A673 (cell line): ENCODE measurements at regions of chr10 and their contacts with region 1.

Region 1: DNA sequence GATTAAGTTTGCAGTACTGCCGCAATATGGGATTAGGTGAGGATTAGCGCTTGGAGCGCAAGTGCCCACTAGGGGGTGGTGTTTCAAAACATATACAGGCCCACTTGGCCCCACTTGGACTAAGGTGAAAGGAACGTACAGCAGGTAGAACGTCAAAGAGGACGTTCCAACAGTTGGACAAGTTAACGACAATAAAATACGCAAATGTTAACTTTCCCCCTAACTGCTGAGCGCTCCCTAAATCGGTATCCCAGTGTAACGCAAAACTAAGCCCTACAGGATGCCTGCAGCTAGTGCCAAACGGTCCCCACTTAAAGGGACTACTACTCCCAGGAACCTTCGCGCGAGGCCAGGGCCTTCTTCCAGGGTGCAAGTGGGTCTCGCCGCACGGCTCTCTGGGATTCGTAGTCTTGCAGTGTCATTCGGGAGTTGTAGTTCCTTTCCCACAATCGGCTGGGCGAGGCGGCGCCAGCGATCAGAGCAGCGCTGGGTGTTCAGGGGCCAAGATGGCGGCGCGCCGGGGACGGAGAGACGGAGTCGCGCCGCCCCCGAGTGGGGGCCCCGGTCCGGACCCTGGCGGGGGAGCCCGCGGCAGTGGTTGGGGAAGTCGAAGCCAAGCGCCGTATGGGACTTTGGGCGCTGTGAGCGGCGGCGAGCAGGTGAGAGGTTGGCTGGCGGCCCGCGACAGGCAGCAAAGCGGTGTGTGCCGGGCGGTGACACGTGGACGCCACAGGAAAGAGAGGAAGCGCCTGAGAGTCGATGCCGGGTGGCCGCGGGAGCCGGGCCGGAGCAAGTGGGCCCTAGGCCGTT is at the start of gene PPRC1:
- DNase-seq: peak; percentile 100
- H3K4me3 ChIP-seq: peak within 1 kb of the TSS; percentile 95
- H3K27ac ChIP-seq: peak within 1 kb of the TSS; percentile 97
- H3K4me1 ChIP-seq: peaks cover 22% of the 10 kb centered on the region
- H3K27me3 ChIP-seq: no peaks in the 10 kb centered on the region
- CTCF ChIP-seq: peak; percentile 96
- total RNA-seq, gene PPRC1: 93.8 and 103 TPM in 2 replicates

Region 2: GRCh38 chr10:101995451-101996063 is 137.2 kb before region 1 on chr10:
- CTCF ChIA-PET with region 1: no interaction called
- POLR2A ChIA-PET with region 1: no interaction called
- intact Hi-C with region 1: no loop called
- DNase-seq: no peak
- H3K4me3 ChIP-seq: no peak overlapping the region
- H3K27ac ChIP-seq: no peak overlapping the region
- H3K4me1 ChIP-seq: peaks cover 5% of the 10 kb centered on the region
- H3K27me3 ChIP-seq: no peaks in the 10 kb centered on the region
- CTCF ChIP-seq: no peak

Region 3: GRCh38 chr10:102114861-102115618 is 17.7 kb before region 1 on chr10:
- CTCF ChIA-PET with region 1: interaction called, 11 read pairs
- POLR2A ChIA-PET with region 1: interaction called, 6 read pairs
- intact Hi-C with region 1: no loop called
- DNase-seq: peak; percentile 97
- H3K4me3 ChIP-seq: peak overlapping the region; percentile 96
- H3K27ac ChIP-seq: peak overlapping the region; percentile 81
- H3K4me1 ChIP-seq: peaks cover 58% of the 10 kb centered on the region
- H3K27me3 ChIP-seq: no peaks in the 10 kb centered on the region
- CTCF ChIP-seq: no peak

Region 4: GRCh38 chr10:102120991-102121753 is 11.6 kb before region 1 on chr10:
- CTCF ChIA-PET with region 1: interaction called, 11 read pairs
- POLR2A ChIA-PET with region 1: interaction called, 3 read pairs
- intact Hi-C with region 1: loop called (anchors 1 kb)
- DNase-seq: peak; percentile 87
- H3K4me3 ChIP-seq: peak overlapping the region; percentile 76
- H3K27ac ChIP-seq: peak overlapping the region; percentile 81
- H3K4me1 ChIP-seq: peaks cover 49% of the 10 kb centered on the region
- H3K27me3 ChIP-seq: no peaks in the 10 kb centered on the region
- CTCF ChIP-seq: no peak

Region 5: GRCh38 chr10:102151774-102152544 is 19.2 kb after region 1 on chr10 and contains the start of gene NOLC1:
- CTCF ChIA-PET with region 1: no interaction called
- POLR2A ChIA-PET with region 1: interaction called, 3 read pairs
- intact Hi-C with region 1: loop called (anchors 2 kb)
- DNase-seq: peak; percentile 99
- H3K4me3 ChIP-seq: peak within 1 kb of the TSS; percentile 73
- H3K27ac ChIP-seq: peak within 1 kb of the TSS; percentile 93
- H3K4me1 ChIP-seq: peaks cover 7% of the 10 kb centered on the region
- H3K27me3 ChIP-seq: no peaks in the 10 kb centered on the region
- CTCF ChIP-seq: no peak
- total RNA-seq, gene NOLC1: 194 and 225 TPM in 2 replicates

Region 6: GRCh38 chr10:102322914-102323313 is 190.1 kb after region 1 on chr10:
- CTCF ChIA-PET with region 1: no interaction called
- POLR2A ChIA-PET with region 1: no interaction called
- intact Hi-C with region 1: no loop called
- DNase-seq: no peak
- H3K4me3 ChIP-seq: no peak overlapping the region
- H3K27ac ChIP-seq: no peak overlapping the region
- H3K4me1 ChIP-seq: no peaks in the 10 kb centered on the region
- H3K27me3 ChIP-seq: no peaks in the 10 kb centered on the region
- CTCF ChIP-seq: no peak